ENCODE measurements at regions of chr11 and their contacts with region 1.

Region 1: GRCh38 chr11:81725701-81726100 is 1008.0 kb downstream of the FAM181B start:
- DNase-seq: peak; percentile 19
- H3K4me3 ChIP-seq: no peak overlapping the region
- H3K27ac ChIP-seq: no peak overlapping the region
- H3K4me1 ChIP-seq: peaks cover 3% of the 10 kb centered on the region
- H3K27me3 ChIP-seq: no peaks in the 10 kb centered on the region
- CTCF ChIP-seq: no peak

Region 2: DNA sequence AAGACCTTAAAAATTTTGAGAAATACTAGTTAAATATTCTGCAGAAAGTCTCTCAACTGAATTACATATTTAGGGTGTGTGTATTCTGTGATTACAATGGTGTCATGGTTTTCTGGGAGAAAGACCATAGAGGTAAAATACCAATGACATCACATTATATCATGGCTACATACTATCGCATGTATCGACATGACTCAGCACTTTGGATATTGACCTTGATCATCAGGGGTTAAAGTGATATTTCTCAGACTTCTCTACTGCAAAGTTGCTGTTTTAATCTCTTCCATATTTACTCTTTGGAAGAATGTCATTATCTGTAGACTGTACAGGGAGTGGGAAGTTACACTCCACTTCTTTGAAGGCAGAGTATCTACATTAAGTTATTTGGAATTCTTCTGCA is 38.6 kb before region 1 on chr11:
- CTCF ChIA-PET with region 1: no interaction called
- dilution Hi-C with region 1: loop called (anchors 5 kb)
- in situ Hi-C with region 1: no loop called
- intact Hi-C with region 1: no loop called
- DNase-seq: no peak
- H3K4me3 ChIP-seq: no peak overlapping the region
- H3K27ac ChIP-seq: no peak overlapping the region
- H3K4me1 ChIP-seq: no peaks in the 10 kb centered on the region
- H3K27me3 ChIP-seq: no peaks in the 10 kb centered on the region
- CTCF ChIP-seq: no peak

Region 3: GRCh38 chr11:81772166-81772565 is 46.5 kb after region 1 on chr11:
- CTCF ChIA-PET with region 1: no interaction called
- dilution Hi-C with region 1: no loop called
- in situ Hi-C with region 1: no loop called
- intact Hi-C with region 1: no loop called
- DNase-seq: no peak
- H3K4me3 ChIP-seq: no peak overlapping the region
- H3K27ac ChIP-seq: no peak overlapping the region
- H3K4me1 ChIP-seq: no peaks in the 10 kb centered on the region
- H3K27me3 ChIP-seq: peaks cover 2% of the 10 kb centered on the region
- CTCF ChIP-seq: no peak